Natural killer cell (primary cell): ENCODE measurements at regions of chr3 and their contacts with region 1.

Region 1: GRCh38 chr3:107271787-107272387 is 105.4 kb upstream of the CCDC54 start:
- DNase-seq: peak in 1 of 2 donors; percentile 36
- ATAC-seq: peak in 1 of 3 donors; percentile 63
- H3K4me3 ChIP-seq: no peak overlapping the region
- H3K4me3 Mint-ChIP-seq: no peak overlapping the region
- H3K27ac ChIP-seq: no peak overlapping the region
- H3K27ac Mint-ChIP-seq: no peak overlapping the region
- H3K4me1 ChIP-seq: no peaks in the 10 kb centered on the region
- H3K4me1 Mint-ChIP-seq: no peaks in the 10 kb centered on the region
- H3K27me3 ChIP-seq: peaks cover 2% of the 10 kb centered on the region
- H3K27me3 Mint-ChIP-seq: peaks cover 15 to 18% of the 10 kb centered on the region in 2 donors
- CTCF ChIP-seq: peak; percentile 45

Region 2: DNA sequence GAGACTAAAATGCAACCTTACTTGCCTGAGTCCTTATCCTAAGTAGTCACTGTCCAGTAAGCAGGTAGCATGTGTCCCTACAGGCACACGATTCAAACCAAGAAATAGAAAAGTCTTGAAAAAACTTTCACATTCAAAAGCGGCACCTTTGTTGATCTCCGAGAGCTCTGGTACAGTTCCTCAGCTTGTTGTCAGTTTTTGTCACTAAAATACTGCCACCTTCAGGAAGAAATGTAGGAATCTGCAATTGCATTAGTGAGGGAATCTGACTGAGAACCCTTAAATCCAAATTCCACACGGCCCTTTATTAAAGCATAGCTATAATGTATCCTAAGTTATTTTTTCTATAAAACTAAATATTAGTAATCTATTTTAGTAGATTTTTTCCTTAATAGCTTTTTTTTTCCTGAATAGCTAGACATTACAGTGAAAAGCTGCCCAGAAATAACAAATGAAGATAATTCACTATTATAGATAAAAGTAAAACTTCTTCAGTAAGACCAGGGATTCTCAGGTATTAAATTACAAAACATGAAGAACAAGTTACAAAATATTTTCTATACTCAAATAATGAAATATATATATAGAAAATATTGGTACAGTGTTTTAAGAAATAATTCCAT is 149.4 kb after region 1 on chr3:
- intact Hi-C with region 1: loop called (anchors 2 kb)
- DNase-seq: peak in 1 of 2 donors; percentile 71
- ATAC-seq: peak in 2 of 3 donors; percentile 65 to 79
- H3K4me3 ChIP-seq: no peak overlapping the region
- H3K4me3 Mint-ChIP-seq: no peak overlapping the region
- H3K27ac ChIP-seq: no peak overlapping the region
- H3K27ac Mint-ChIP-seq: peak overlapping the region in 1 of 2 donors; percentile 13
- H3K4me1 ChIP-seq: no peaks in the 10 kb centered on the region
- H3K4me1 Mint-ChIP-seq: peaks cover 5% of the 10 kb centered on the region in 2 donors
- H3K27me3 ChIP-seq: peaks cover 2% of the 10 kb centered on the region
- H3K27me3 Mint-ChIP-seq: peaks cover 18 to 35% of the 10 kb centered on the region in 2 donors
- CTCF ChIP-seq: peak; percentile 56